ENCODE measurements at regions of chr14 and their contacts with region 1.

Region 1: GRCh38 chr14:50773632-50774541 is 57.1 kb downstream of the NIN start:
- DNase-seq: peak; percentile 29
- H3K4me3 Mint-ChIP-seq: no peak overlapping the region
- H3K27ac Mint-ChIP-seq: no peak overlapping the region
- H3K4me1 Mint-ChIP-seq: peaks cover 16% of the 10 kb centered on the region
- H3K27me3 Mint-ChIP-seq: no peaks in the 10 kb centered on the region

Region 2: DNA sequence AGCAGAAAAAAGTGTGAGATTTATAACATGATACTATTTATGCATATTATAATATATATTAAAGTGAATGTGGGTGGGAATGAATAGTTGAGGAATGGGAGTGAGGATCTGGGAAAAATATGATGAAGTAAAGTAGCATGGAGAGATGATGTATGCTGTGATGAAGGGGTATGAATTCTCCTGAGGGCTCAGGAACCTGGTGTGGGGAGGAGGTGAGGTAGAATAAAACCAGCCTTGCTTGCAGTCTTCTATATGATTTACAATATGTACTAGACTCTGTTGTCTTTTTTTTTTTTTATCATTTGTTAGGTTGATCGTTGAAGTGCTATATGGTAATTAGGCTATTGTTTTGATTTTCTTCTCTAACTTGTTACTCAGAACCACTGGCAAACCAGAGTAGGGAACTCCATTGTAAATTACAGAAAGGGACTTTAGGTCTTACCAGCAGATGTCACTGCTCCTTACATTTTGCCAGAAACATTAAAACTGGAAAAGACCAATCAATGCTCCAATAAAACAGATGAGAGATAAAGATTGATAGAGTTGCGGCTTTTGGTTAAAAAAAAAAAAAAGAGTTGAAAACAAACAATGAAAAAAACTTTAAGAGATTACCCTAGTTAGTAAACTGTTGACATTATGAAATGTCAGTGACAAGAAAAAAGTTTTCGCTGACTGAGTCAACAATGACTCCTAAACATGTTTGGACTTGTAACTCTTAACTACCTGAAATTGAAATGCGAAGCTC is 174.0 kb before region 1 on chr14:
- CTCF ChIA-PET with region 1: interaction called, 16 read pairs
- POLR2A ChIA-PET with region 1: no interaction called
- DNase-seq: no peak
- H3K4me3 Mint-ChIP-seq: no peak overlapping the region
- H3K27ac Mint-ChIP-seq: no peak overlapping the region
- H3K4me1 Mint-ChIP-seq: peaks cover 2% of the 10 kb centered on the region
- H3K27me3 Mint-ChIP-seq: no peaks in the 10 kb centered on the region

Region 3: GRCh38 chr14:50619556-50620141 is 154.2 kb before region 1 on chr14:
- CTCF ChIA-PET with region 1: interaction called, 16 read pairs
- POLR2A ChIA-PET with region 1: no interaction called
- DNase-seq: no peak
- H3K4me3 Mint-ChIP-seq: no peak overlapping the region
- H3K27ac Mint-ChIP-seq: no peak overlapping the region
- H3K4me1 Mint-ChIP-seq: peaks cover 2% of the 10 kb centered on the region
- H3K27me3 Mint-ChIP-seq: no peaks in the 10 kb centered on the region

Region 4: GRCh38 chr14:50762001-50762930 is 11.6 kb before region 1 on chr14:
- CTCF ChIA-PET with region 1: interaction called, 96 read pairs
- POLR2A ChIA-PET with region 1: interaction called, 5 read pairs
- DNase-seq: no peak
- H3K4me3 Mint-ChIP-seq: no peak overlapping the region
- H3K27ac Mint-ChIP-seq: no peak overlapping the region
- H3K4me1 Mint-ChIP-seq: peaks cover 11% of the 10 kb centered on the region
- H3K27me3 Mint-ChIP-seq: no peaks in the 10 kb centered on the region

Region 5: GRCh38 chr14:50785457-50786063 is 11.7 kb after region 1 on chr14:
- CTCF ChIA-PET with region 1: interaction called, 37 read pairs
- POLR2A ChIA-PET with region 1: interaction called, 7 read pairs
- DNase-seq: no peak
- H3K4me3 Mint-ChIP-seq: no peak overlapping the region
- H3K27ac Mint-ChIP-seq: peak overlapping the region; percentile 76
- H3K4me1 Mint-ChIP-seq: peaks cover 51% of the 10 kb centered on the region
- H3K27me3 Mint-ChIP-seq: no peaks in the 10 kb centered on the region

Region 6: DNA sequence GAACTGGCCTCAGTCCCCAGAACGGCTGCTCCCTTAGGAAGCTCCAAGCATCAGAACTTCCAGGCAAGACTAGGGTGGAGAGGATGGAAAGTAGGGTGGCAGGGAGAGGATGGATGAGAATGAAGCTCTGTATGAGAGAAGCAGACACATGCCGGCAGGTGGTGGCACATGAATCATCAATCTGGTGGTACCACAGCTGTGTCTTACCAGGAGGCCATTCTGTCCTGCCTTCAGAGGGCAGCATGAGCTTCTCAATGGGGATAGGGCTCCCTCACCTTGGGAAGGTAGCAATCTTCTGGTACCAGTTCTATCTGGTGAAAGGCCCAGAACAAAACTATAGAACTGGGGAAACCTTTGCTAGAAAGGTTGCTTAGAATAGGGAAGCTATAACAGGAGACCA is 225.8 kb after region 1 on chr14:
- CTCF ChIA-PET with region 1: no interaction called
- POLR2A ChIA-PET with region 1: no interaction called
- DNase-seq: no peak
- H3K4me3 Mint-ChIP-seq: no peak overlapping the region
- H3K27ac Mint-ChIP-seq: no peak overlapping the region
- H3K4me1 Mint-ChIP-seq: no peaks in the 10 kb centered on the region
- H3K27me3 Mint-ChIP-seq: peaks cover 6% of the 10 kb centered on the region